ENCODE measurements at regions of chr9 and their contacts with region 1.

Region 1: GRCh38 chr9:132651254-132651653 is 18.5 kb downstream of the DDX31 start:
- DNase-seq: peak; percentile 98
- ATAC-seq: peak; percentile 63
- H3K4me3 ChIP-seq: no peak overlapping the region
- H3K27ac ChIP-seq: no peak overlapping the region
- H3K4me1 ChIP-seq: peaks cover 10% of the 10 kb centered on the region
- H3K27me3 ChIP-seq: no peaks in the 10 kb centered on the region
- CTCF ChIP-seq: peak; percentile 73
- POLR2A ChIP-seq: no peak
- RAD21 ChIP-seq: peak; percentile 64

Region 2: DNA sequence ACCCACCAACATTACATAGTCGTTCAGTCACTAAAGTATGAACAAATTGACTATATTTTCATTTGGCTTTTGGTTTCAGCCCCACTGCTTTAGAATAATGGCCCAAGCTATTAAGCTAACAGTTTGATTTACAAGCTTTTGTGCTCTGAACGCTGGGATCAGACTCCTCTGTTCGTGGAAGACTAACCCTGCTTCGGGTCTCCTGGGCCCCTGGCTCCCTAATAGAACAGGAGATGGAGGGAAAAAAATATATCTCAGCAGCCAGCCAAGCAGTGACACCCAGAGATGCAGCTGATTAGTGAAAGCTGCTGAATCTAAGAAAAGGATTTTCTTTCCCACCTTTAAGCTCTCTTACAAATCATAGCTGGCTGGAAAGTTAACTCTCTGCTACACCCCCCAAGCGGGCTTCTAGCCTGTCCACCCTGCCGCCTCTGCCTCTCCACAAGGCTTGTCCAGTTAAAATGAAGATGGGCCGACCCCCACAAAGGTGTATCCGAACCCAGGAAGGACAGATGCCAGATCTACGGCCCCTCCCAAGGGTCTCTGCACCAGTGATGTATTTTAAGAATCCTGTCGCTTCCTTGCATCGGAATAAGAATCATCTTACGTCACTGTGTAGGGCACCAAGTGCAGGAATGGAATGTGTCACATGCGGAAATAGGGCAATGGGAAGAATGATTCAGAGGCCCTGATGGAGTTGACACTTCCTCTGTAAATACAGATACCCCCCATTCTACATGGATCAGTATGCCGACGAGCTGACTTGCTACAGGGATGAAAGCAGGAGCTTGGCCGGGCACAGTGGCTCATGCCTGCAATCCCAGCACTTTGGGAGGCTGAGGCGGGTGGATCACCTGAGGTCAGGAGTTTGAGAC is 102.3 kb before region 1 on chr9:
- CTCF ChIA-PET with region 1: no interaction called
- POLR2A ChIA-PET with region 1: no interaction called
- dilution Hi-C with region 1: no loop called
- in situ Hi-C with region 1: no loop called
- intact Hi-C with region 1: no loop called
- DNase-seq: no peak
- ATAC-seq: no peak
- H3K4me3 ChIP-seq: no peak overlapping the region
- H3K27ac ChIP-seq: no peak overlapping the region
- H3K4me1 ChIP-seq: no peaks in the 10 kb centered on the region
- H3K27me3 ChIP-seq: peaks cover 43% of the 10 kb centered on the region
- CTCF ChIP-seq: no peak
- POLR2A ChIP-seq: no peak
- RAD21 ChIP-seq: no peak

Region 3: GRCh38 chr9:132694157-132694556 is 42.9 kb after region 1 on chr9:
- CTCF ChIA-PET with region 1: no interaction called
- POLR2A ChIA-PET with region 1: no interaction called
- dilution Hi-C with region 1: no loop called
- in situ Hi-C with region 1: no loop called
- intact Hi-C with region 1: loop called (anchors 2 kb)
- DNase-seq: peak; percentile 25
- ATAC-seq: no peak; the same call in 1 of the 2 replicates
- H3K4me3 ChIP-seq: no peak overlapping the region
- H3K27ac ChIP-seq: no peak overlapping the region
- H3K4me1 ChIP-seq: no peaks in the 10 kb centered on the region
- H3K27me3 ChIP-seq: no peaks in the 10 kb centered on the region
- CTCF ChIP-seq: peak; percentile 15; the same call in 1 of the 2 replicates
- POLR2A ChIP-seq: no peak
- RAD21 ChIP-seq: no peak

Measured in IMR-90 (cell line).